PC-3 (cell line): ENCODE measurements at regions of chr7 and their contacts with region 1.

Region 1: GRCh38 chr7:114081606-114082425 is 163.0 kb upstream of the PPP1R3A start:
- DNase-seq: peak; percentile 70
- ATAC-seq: peak; percentile 51
- H3K4me3 ChIP-seq: no peak overlapping the region
- H3K27ac ChIP-seq: no peak overlapping the region
- H3K4me1 ChIP-seq: no peaks in the 10 kb centered on the region
- H3K27me3 ChIP-seq: peaks cover 92% of the 10 kb centered on the region
- CTCF ChIP-seq: peak; percentile 71

Region 2: DNA sequence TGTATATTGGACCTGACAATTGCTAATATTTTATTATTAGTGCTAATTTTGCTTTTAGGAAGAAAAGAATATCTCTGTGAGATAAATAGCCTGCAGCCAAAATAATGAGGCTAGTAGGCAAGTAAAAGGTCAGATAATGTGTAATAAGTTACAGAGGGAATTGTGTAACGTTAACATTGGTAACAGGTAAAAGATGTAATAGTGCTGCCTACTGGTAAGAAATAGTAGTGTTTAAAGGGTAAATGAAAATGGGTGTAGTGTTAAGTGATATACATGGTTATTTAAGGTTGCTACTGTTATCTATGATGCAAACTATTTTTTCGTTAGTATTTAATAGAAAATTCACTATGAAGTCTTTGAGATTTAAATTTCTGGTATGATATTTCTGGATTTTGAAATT is 323.6 kb after region 1 on chr7:
- CTCF ChIA-PET with region 1: no interaction called
- POLR2A ChIA-PET with region 1: no interaction called
- intact Hi-C with region 1: loop called (anchors 1 kb)
- DNase-seq: peak; percentile 34
- ATAC-seq: peak; percentile 64
- H3K4me3 ChIP-seq: no peak overlapping the region
- H3K27ac ChIP-seq: no peak overlapping the region
- H3K4me1 ChIP-seq: no peaks in the 10 kb centered on the region
- H3K27me3 ChIP-seq: peaks cover 30% of the 10 kb centered on the region
- CTCF ChIP-seq: peak; percentile 58

Region 3: GRCh38 chr7:114539575-114539974 is 457.8 kb after region 1 on chr7:
- CTCF ChIA-PET with region 1: interaction called, 6 read pairs
- POLR2A ChIA-PET with region 1: no interaction called
- intact Hi-C with region 1: loop called (anchors 5 kb)
- DNase-seq: peak; percentile 16
- ATAC-seq: peak; percentile 60; the same call in 1 of the 2 replicates
- H3K4me3 ChIP-seq: no peak overlapping the region
- H3K27ac ChIP-seq: no peak overlapping the region
- H3K4me1 ChIP-seq: no peaks in the 10 kb centered on the region
- H3K27me3 ChIP-seq: peaks cover 62% of the 10 kb centered on the region; the same call in 1 of the 2 replicates
- CTCF ChIP-seq: peak; percentile 52

Region 4: GRCh38 chr7:114663502-114663901 is 581.7 kb after region 1 on chr7:
- CTCF ChIA-PET with region 1: interaction called, 5 read pairs
- POLR2A ChIA-PET with region 1: no interaction called
- intact Hi-C with region 1: loop called (anchors 5 kb)
- DNase-seq: peak; percentile 52
- ATAC-seq: no peak
- H3K4me3 ChIP-seq: no peak overlapping the region
- H3K27ac ChIP-seq: no peak overlapping the region
- H3K4me1 ChIP-seq: no peaks in the 10 kb centered on the region
- H3K27me3 ChIP-seq: peaks cover 60% of the 10 kb centered on the region
- CTCF ChIP-seq: peak; percentile 47

Region 5: DNA sequence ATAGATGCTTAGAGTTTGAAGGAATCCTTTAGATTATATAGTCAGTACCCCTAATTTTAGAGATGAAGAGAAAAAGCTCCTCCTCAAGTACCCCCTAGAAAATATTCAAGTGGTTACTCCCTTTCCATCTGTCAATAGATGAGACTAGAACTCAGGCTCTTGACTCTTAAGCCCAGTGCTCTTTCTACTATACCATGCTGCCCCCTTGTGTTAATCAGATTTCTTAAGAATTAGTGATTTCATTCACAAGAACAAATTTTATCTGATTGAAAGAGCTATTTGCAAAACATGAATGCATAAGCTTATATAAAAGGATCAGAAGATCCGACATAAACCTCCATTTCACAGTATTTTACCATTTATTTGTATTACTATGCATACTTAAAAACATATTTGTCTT is 1769.5 kb after region 1 on chr7:
- CTCF ChIA-PET with region 1: interaction called, 10 read pairs
- POLR2A ChIA-PET with region 1: no interaction called
- intact Hi-C with region 1: loop called (anchors 1 kb)
- DNase-seq: peak; percentile 69
- ATAC-seq: peak; percentile 55; the same call in 1 of the 2 replicates
- H3K4me3 ChIP-seq: no peak overlapping the region
- H3K27ac ChIP-seq: no peak overlapping the region
- H3K4me1 ChIP-seq: no peaks in the 10 kb centered on the region
- H3K27me3 ChIP-seq: peaks cover 61% of the 10 kb centered on the region
- CTCF ChIP-seq: peak; percentile 67

Region 6: DNA sequence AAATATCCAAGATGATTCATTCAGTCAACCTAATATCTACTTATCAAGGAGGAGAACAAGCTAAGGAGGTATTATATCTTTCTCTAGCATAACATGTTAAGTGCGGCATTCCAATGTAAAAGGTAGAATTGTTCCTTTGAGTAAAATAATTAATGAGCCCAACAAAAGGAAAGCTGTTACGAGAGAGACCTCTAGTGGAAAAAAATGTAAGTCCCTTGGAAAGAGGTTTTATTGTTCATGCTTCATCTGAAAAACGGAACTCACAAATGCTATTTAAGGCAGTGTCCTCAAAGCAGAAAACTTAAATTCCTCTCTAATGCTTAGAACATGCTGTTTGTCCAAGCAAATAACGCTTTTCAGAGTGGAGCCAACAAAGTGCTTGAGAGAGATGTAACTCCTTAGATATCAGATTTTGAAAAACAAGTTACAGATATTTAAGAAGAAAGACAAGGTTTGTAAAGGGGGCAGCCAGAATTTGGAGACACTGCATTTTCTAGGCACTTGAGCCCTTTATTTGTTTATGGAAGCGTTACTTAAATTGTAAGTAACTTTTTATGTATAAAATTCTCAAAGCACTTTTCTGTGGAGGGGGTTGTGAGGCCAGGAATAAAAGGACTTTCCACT is 1828.8 kb after region 1 on chr7:
- CTCF ChIA-PET with region 1: no interaction called
- POLR2A ChIA-PET with region 1: no interaction called
- intact Hi-C with region 1: loop called (anchors 1 kb)
- DNase-seq: peak; percentile 53
- ATAC-seq: peak; percentile 54; the same call in 1 of the 2 replicates
- H3K4me3 ChIP-seq: no peak overlapping the region
- H3K27ac ChIP-seq: no peak overlapping the region
- H3K4me1 ChIP-seq: no peaks in the 10 kb centered on the region
- H3K27me3 ChIP-seq: peaks cover 82% of the 10 kb centered on the region
- CTCF ChIP-seq: peak; percentile 73